ENCODE measurements at regions of chr12 and their contacts with region 1.

Region 1: DNA sequence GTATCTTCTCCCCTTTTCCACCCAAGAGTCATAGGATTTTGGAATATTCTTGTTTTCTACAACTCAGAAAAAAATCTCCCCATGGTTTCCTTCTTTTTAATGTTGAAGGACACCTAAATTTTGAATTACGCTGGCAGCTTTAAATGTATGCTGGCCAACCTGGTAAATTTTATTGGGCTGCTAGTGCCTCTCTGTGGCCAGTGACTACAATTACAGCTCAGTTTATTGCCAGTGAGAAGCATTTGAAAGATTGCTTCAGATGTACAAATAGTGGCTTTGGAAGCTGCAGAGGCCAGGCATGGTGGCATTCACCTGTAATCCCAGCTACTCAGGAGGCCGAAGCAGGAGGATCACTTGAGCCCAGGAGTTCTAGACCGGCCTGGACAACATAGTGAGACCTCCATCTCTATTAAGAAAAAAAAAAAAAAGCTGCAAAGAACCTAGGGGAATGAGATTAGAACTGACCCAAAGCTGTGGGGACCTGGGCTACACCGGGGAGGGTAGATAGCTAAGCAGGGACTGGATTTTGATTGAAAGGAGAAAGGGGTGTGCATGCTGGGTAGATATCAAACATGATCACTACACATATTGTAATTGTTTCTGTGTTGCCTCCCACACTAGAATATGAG is 7.6 kb upstream of the RAB21 start:
- DNase-seq: peak; percentile 84
- H3K4me3 ChIP-seq: no peak overlapping the region
- H3K27ac ChIP-seq: no peak overlapping the region
- H3K4me1 ChIP-seq: peaks cover 5% of the 10 kb centered on the region
- CTCF ChIP-seq: peak; percentile 96

Region 2: DNA sequence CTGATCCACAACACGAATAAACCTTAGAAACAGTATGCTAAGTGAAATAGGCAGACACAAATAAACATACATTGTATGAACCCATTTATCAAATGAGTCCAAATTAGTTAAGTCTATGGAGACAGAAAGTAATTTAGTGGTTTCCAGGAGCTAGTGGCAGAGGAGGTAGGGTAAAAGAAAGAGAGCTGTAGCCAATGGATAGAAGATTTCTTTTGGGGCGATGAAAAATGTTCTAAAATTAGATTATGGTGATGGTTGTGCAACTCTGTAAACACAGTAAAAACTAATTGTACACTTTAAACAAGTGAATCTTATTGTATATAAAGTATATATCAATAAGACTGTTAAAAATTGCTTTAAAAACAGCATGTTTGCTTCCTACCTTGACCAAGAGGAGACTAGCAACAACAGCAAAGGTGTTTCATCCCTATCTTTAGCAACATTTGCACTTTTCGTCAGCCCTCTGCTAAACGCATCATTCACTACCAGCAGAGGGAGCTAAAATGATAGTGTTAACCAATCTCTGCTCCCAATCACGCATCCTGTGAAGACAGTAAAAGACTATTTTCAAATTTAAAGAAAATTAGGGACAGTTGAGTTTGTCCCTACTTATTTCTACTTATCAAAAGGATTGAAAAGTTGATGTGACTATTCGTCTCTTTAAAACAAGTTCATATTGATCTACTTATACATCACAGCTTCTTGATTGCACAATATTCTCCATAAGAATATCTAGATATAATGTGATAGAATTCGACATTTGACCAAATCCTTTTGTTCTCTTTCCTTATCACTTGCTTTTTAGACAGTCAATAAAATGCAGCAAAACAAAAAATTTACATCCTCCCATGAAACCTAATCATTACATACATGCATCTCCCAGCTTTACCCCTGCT is 331.5 kb before region 1 on chr12:
- CTCF ChIA-PET with region 1: no interaction called
- POLR2A ChIA-PET with region 1: interaction called, 4 read pairs
- intact Hi-C with region 1: loop called (anchors 1 kb)
- DNase-seq: peak; percentile 69
- H3K4me3 ChIP-seq: no peak overlapping the region
- H3K27ac ChIP-seq: no peak overlapping the region
- H3K4me1 ChIP-seq: no peaks in the 10 kb centered on the region
- CTCF ChIP-seq: peak; percentile 94

Region 3: DNA sequence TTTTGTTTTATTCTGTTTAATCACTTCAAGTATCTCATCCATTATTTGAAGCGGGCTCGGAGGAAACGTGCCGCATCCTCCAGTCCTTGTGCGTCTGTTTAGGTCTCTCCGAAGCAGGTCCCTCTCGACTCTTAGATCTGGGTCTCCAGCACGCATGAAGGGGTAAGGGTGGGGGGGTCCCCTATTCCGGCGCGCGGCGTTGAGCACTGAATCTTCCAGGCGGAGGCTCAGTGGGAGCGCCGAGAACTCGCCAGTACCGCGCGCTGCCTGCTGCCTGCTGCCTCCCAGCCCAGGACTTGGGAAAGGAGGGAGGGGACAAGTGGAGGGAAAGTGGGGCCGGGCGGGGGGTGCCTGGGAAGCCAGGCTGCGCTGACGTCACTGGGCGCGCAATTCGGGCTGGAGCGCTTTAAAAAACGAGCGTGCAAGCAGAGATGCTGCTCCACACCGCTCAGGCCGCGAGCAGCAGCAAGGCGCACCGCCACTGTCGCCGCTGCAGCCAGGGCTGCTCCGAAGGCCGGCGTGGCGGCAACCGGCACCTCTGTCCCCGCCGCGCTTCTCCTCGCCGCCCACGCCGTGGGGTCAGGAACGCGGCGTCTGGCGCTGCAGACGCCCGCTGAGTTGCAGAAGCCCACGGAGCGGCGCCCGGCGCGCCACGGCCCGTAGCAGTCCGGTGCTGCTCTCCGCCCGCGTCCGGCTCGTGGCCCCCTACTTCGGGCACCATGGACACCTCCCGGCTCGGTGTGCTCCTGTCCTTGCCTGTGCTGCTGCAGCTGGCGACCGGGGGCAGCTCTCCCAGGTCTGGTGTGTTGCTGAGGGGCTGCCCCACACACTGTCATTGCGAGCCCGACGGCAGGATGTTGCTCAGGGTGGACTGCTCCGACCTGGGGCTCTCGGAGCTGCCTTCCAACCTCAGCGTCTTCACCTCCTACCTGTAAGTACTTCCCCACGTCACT is 307.5 kb before region 1 on chr12 and contains the start of gene LGR5:
- CTCF ChIA-PET with region 1: no interaction called
- POLR2A ChIA-PET with region 1: no interaction called
- intact Hi-C with region 1: no loop called
- DNase-seq: no peak
- H3K4me3 ChIP-seq: no peak within 1 kb of the TSS
- H3K27ac ChIP-seq: no peak within 1 kb of the TSS
- H3K4me1 ChIP-seq: no peaks in the 10 kb centered on the region
- CTCF ChIP-seq: no peak
- total RNA-seq, gene LGR5: not detected in 2 replicates

Region 4: GRCh38 chr12:71551529-71551928 is 195.6 kb before region 1 on chr12:
- CTCF ChIA-PET with region 1: no interaction called
- POLR2A ChIA-PET with region 1: no interaction called
- intact Hi-C with region 1: loop called (anchors 5 kb)
- DNase-seq: peak; percentile 14
- H3K4me3 ChIP-seq: no peak overlapping the region
- H3K27ac ChIP-seq: no peak overlapping the region
- H3K4me1 ChIP-seq: no peaks in the 10 kb centered on the region
- CTCF ChIP-seq: peak; percentile 69

Region 5: GRCh38 chr12:71636704-71637115 is 110.4 kb before region 1 on chr12:
- CTCF ChIA-PET with region 1: interaction called, 5 read pairs
- POLR2A ChIA-PET with region 1: interaction called, 3 read pairs
- intact Hi-C with region 1: loop called (anchors 1 kb)
- DNase-seq: peak; percentile 83
- H3K4me3 ChIP-seq: no peak overlapping the region
- H3K27ac ChIP-seq: no peak overlapping the region
- H3K4me1 ChIP-seq: no peaks in the 10 kb centered on the region
- CTCF ChIP-seq: peak; percentile 94

Region 6: GRCh38 chr12:71671816-71672215 is 75.3 kb before region 1 on chr12:
- CTCF ChIA-PET with region 1: no interaction called
- POLR2A ChIA-PET with region 1: interaction called, 10 read pairs
- intact Hi-C with region 1: no loop called
- DNase-seq: no peak
- H3K4me3 ChIP-seq: no peak overlapping the region
- H3K27ac ChIP-seq: no peak overlapping the region
- H3K4me1 ChIP-seq: peaks cover 5% of the 10 kb centered on the region
- CTCF ChIP-seq: no peak